ENCODE measurements at regions of chr10 and their contacts with region 1.

Region 1: DNA sequence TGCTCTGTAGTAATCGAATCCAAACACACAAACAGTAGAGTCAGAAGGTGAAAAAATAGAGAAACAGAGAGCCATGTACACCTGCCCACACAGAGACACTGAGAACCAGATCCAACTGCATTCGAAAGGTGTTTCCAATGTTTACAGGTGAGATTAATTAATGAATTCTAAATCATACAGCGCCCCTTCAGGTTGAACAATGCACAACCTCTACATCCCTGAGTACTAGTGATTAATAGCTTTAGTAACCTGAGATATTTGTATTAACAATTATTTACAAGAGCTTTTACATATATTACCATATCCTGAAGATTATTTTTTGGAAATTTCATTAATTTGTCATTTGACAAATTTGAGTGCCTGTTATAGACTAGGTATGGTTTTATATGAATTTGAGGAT is 7.6 kb upstream of the MRC1 start:
- DNase-seq: no peak
- ATAC-seq: peak; percentile 32; the same call in 1 of the 2 replicates
- H3K4me3 Mint-ChIP-seq: no peak overlapping the region
- H3K27ac Mint-ChIP-seq: no peak overlapping the region
- H3K4me1 Mint-ChIP-seq: no peaks in the 10 kb centered on the region
- H3K27me3 Mint-ChIP-seq: no peaks in the 10 kb centered on the region
- CTCF ChIP-seq: peak; percentile 42

Region 2: GRCh38 chr10:17637869-17638268 is 163.6 kb before region 1 on chr10:
- CTCF ChIA-PET with region 1: no interaction called
- POLR2A ChIA-PET with region 1: no interaction called
- DNase-seq: no peak
- ATAC-seq: no peak
- H3K4me3 Mint-ChIP-seq: no peak overlapping the region
- H3K27ac Mint-ChIP-seq: no peak overlapping the region
- H3K4me1 Mint-ChIP-seq: peaks cover 4% of the 10 kb centered on the region
- H3K27me3 Mint-ChIP-seq: no peaks in the 10 kb centered on the region
- CTCF ChIP-seq: no peak

Region 3: DNA sequence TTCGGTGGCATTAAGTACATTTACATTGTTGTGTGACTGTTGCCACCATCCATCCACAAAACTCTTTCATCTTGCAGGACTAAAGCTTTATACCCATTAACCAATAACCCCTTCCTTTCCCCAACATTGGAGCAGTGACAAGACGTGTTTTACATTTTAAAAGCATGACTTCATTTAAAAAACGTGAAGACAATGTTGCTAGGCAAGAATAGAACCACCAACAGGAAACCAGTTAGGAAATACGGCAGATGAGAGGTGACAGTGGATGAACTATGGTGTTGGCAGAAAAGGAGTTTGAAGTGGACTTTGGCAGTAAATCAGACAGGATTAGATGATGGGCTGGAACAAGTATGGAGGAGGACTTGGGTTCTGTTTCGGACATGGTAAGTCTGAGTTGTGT is 32.5 kb before region 1 on chr10:
- CTCF ChIA-PET with region 1: no interaction called
- POLR2A ChIA-PET with region 1: no interaction called
- DNase-seq: no peak
- ATAC-seq: no peak
- H3K4me3 Mint-ChIP-seq: no peak overlapping the region
- H3K27ac Mint-ChIP-seq: no peak overlapping the region
- H3K4me1 Mint-ChIP-seq: peaks cover 5% of the 10 kb centered on the region
- H3K27me3 Mint-ChIP-seq: peaks cover 38% of the 10 kb centered on the region
- CTCF ChIP-seq: no peak

Region 4: GRCh38 chr10:17787078-17787961 is 14.2 kb before region 1 on chr10:
- CTCF ChIA-PET with region 1: interaction called, 17 read pairs
- POLR2A ChIA-PET with region 1: no interaction called
- DNase-seq: no peak
- ATAC-seq: peak; percentile 77
- H3K4me3 Mint-ChIP-seq: no peak overlapping the region
- H3K27ac Mint-ChIP-seq: no peak overlapping the region
- H3K4me1 Mint-ChIP-seq: peaks cover 5% of the 10 kb centered on the region
- H3K27me3 Mint-ChIP-seq: no peaks in the 10 kb centered on the region
- CTCF ChIP-seq: no peak

Measured in WTC11 (cell line).